ENCODE measurements at regions of chr2 and their contacts with region 1.

Region 1: GRCh38 chr2:201158111-201158929 is 24.6 kb upstream of the CASP10 start:
- DNase-seq: peak; percentile 95
- ATAC-seq: peak; percentile 91
- H3K4me3 ChIP-seq: peak overlapping the region in 1 of 5 experiments; percentile 9
- H3K4me3 Mint-ChIP-seq: peak overlapping the region; percentile 64
- H3K27ac ChIP-seq: peak overlapping the region; percentile 84 to 85
- H3K27ac Mint-ChIP-seq: peak overlapping the region; percentile 90
- H3K4me1 ChIP-seq: peaks cover 43 to 47% of the 10 kb centered on the region in 2 donors
- H3K4me1 Mint-ChIP-seq: peaks cover 52% of the 10 kb centered on the region
- H3K27me3 ChIP-seq: no peaks in the 10 kb centered on the region
- H3K27me3 Mint-ChIP-seq: no peaks in the 10 kb centered on the region
- CTCF ChIP-seq: peak; percentile 69

Region 2: GRCh38 chr2:200901459-200902072 is 256.8 kb before region 1 on chr2:
- CTCF ChIA-PET with region 1: interaction called, 10 read pairs
- POLR2A ChIA-PET with region 1: no interaction called
- intact Hi-C with region 1: no loop called
- DNase-seq: peak; percentile 86
- ATAC-seq: peak; percentile 100
- H3K4me3 ChIP-seq: no peak overlapping the region
- H3K4me3 Mint-ChIP-seq: no peak overlapping the region
- H3K27ac ChIP-seq: peak overlapping the region in 1 of 2 donors; percentile 40
- H3K27ac Mint-ChIP-seq: no peak overlapping the region
- H3K4me1 ChIP-seq: no peaks in the 10 kb centered on the region
- H3K4me1 Mint-ChIP-seq: peaks cover 4% of the 10 kb centered on the region
- H3K27me3 ChIP-seq: no peaks in the 10 kb centered on the region
- H3K27me3 Mint-ChIP-seq: no peaks in the 10 kb centered on the region
- CTCF ChIP-seq: peak; percentile 94

Region 3: GRCh38 chr2:200963124-200963917 is 195.0 kb before region 1 on chr2 and contains the start of gene ORC2:
- CTCF ChIA-PET with region 1: interaction called, 22 read pairs
- POLR2A ChIA-PET with region 1: interaction called, 4 read pairs
- intact Hi-C with region 1: loop called (anchors 1 kb)
- DNase-seq: peak; percentile 97
- ATAC-seq: peak; percentile 92
- H3K4me3 ChIP-seq: peak within 1 kb of the TSS; percentile 77 to 97 (median 90)
- H3K4me3 Mint-ChIP-seq: peak within 1 kb of the TSS; percentile 92
- H3K27ac ChIP-seq: peak within 1 kb of the TSS; percentile 90 to 92
- H3K27ac Mint-ChIP-seq: peak within 1 kb of the TSS; percentile 98
- H3K4me1 ChIP-seq: peaks cover 28 to 30% of the 10 kb centered on the region in 2 donors
- H3K4me1 Mint-ChIP-seq: peaks cover 53% of the 10 kb centered on the region
- H3K27me3 ChIP-seq: no peaks in the 10 kb centered on the region
- H3K27me3 Mint-ChIP-seq: no peaks in the 10 kb centered on the region
- CTCF ChIP-seq: peak; percentile 77
- total RNA-seq, gene ORC2: 50.6 and 63.6 TPM in 2 replicates

Region 4: GRCh38 chr2:201130524-201131186 is 27.7 kb before region 1 on chr2:
- CTCF ChIA-PET with region 1: interaction called, 19 read pairs
- POLR2A ChIA-PET with region 1: interaction called, 4 read pairs
- intact Hi-C with region 1: no loop called
- DNase-seq: peak; percentile 31
- ATAC-seq: no peak
- H3K4me3 ChIP-seq: no peak overlapping the region
- H3K4me3 Mint-ChIP-seq: peak overlapping the region; percentile 60
- H3K27ac ChIP-seq: peak overlapping the region; percentile 24 to 45
- H3K27ac Mint-ChIP-seq: peak overlapping the region; percentile 82
- H3K4me1 ChIP-seq: peaks cover 63 to 67% of the 10 kb centered on the region in 2 donors
- H3K4me1 Mint-ChIP-seq: peaks cover 71% of the 10 kb centered on the region
- H3K27me3 ChIP-seq: no peaks in the 10 kb centered on the region
- H3K27me3 Mint-ChIP-seq: no peaks in the 10 kb centered on the region
- CTCF ChIP-seq: no peak

Region 5: DNA sequence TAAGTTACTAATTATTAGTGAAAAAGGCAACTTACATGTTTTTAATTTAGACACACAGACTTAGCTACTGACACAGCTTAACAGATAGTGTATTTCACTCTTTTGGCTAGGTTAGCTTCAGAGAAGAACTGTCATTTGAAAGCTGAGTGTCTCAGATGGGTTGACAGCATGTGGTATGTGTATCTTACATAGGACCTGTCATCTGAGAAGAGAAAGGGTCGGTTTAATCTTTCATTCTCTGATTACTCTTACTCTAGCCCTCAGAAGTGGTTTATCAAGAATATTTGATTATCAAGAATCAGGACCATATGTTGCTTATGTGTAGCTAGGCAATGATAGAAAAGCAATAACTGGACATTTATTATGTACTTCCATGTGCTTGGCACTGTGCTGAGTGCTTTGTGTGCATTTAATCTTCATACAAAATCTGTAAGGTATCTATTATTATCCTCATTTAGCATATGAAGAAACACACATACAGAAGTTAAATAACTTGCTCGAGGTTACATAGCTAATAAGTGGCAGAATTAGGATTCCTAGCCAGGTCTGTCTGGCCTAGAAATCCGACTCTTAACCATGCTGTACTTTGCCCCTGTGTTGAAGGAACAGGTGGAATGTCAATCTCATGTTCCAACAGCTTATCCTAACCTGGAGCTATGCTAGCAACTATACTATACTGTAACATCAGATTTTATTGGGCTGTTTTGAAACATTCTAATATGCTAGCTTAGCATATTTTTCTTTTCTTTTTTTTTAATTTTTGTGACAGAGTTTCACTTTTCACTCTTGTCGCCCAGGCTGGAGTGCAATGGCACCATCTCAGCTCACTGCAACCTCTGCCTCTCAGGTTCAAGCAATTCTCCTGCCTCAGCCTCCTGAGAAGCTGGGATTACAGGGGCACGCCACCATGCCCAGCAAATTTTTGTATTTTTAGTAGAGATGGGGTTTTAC is 13.9 kb before region 1 on chr2:
- CTCF ChIA-PET with region 1: interaction called, 13 read pairs
- POLR2A ChIA-PET with region 1: interaction called, 6 read pairs
- intact Hi-C with region 1: no loop called
- DNase-seq: no peak
- ATAC-seq: no peak
- H3K4me3 ChIP-seq: no peak overlapping the region
- H3K4me3 Mint-ChIP-seq: no peak overlapping the region
- H3K27ac ChIP-seq: no peak overlapping the region
- H3K27ac Mint-ChIP-seq: peak overlapping the region; percentile 3
- H3K4me1 ChIP-seq: no peaks in the 10 kb centered on the region
- H3K4me1 Mint-ChIP-seq: peaks cover 4% of the 10 kb centered on the region
- H3K27me3 ChIP-seq: no peaks in the 10 kb centered on the region
- H3K27me3 Mint-ChIP-seq: no peaks in the 10 kb centered on the region
- CTCF ChIP-seq: no peak

Region 6: GRCh38 chr2:201171259-201171814 is 13.0 kb after region 1 on chr2:
- CTCF ChIA-PET with region 1: interaction called, 6 read pairs
- POLR2A ChIA-PET with region 1: interaction called, 3 read pairs
- intact Hi-C with region 1: loop called (anchors 1 kb)
- DNase-seq: no peak
- ATAC-seq: no peak
- H3K4me3 ChIP-seq: no peak overlapping the region
- H3K4me3 Mint-ChIP-seq: no peak overlapping the region
- H3K27ac ChIP-seq: no peak overlapping the region
- H3K27ac Mint-ChIP-seq: no peak overlapping the region
- H3K4me1 ChIP-seq: peaks cover 12 to 20% of the 10 kb centered on the region in 2 donors
- H3K4me1 Mint-ChIP-seq: peaks cover 27% of the 10 kb centered on the region
- H3K27me3 ChIP-seq: no peaks in the 10 kb centered on the region
- H3K27me3 Mint-ChIP-seq: no peaks in the 10 kb centered on the region
- CTCF ChIP-seq: no peak

Region 7: DNA sequence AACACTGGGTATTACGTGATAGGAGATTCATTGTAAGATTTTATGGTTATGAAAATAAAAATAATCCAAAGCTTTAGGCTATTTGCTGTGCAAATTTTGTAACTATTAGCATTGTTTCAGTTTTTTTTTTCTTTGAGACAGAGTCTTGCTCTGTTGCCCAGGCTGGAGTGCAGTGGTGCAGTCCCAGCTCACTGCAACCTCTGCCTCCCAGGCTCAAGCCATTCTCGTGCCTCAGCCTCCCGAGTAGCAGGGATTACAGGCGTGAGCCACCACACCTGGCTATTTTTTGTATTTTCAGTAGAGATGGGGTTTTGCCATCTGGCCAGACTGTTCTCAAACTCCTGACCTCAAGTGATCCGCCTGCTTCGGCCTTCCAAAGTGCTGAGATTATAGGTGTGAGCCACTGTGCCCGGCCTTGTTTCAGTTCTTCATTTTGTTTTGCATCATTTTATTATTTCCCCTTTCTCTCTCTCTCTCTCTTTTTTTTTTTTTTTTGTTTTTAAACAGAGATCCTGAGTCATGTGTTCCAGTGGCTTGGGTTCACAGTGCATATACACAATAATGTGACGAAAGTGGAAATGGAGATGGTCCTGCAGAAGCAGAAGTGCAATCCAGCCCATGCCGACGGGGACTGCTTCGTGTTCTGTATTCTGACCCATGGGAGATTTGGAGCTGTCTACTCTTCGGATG is 50.4 kb after region 1 on chr2:
- CTCF ChIA-PET with region 1: interaction called, 3 read pairs
- POLR2A ChIA-PET with region 1: no interaction called
- intact Hi-C with region 1: loop called (anchors 1 kb)
- DNase-seq: peak; percentile 90
- ATAC-seq: peak; percentile 85
- H3K4me3 ChIP-seq: peak overlapping the region in 3 of 5 experiments; percentile 8 to 40 (median 31)
- H3K4me3 Mint-ChIP-seq: peak overlapping the region; percentile 68
- H3K27ac ChIP-seq: peak overlapping the region; percentile 60 to 76
- H3K27ac Mint-ChIP-seq: peak overlapping the region; percentile 94
- H3K4me1 ChIP-seq: peaks cover 34 to 42% of the 10 kb centered on the region in 2 donors
- H3K4me1 Mint-ChIP-seq: peaks cover 58% of the 10 kb centered on the region
- H3K27me3 ChIP-seq: no peaks in the 10 kb centered on the region
- H3K27me3 Mint-ChIP-seq: no peaks in the 10 kb centered on the region
- CTCF ChIP-seq: no peak